ENCODE measurements at regions of chr19 and their contacts with region 1.

Region 1: DNA sequence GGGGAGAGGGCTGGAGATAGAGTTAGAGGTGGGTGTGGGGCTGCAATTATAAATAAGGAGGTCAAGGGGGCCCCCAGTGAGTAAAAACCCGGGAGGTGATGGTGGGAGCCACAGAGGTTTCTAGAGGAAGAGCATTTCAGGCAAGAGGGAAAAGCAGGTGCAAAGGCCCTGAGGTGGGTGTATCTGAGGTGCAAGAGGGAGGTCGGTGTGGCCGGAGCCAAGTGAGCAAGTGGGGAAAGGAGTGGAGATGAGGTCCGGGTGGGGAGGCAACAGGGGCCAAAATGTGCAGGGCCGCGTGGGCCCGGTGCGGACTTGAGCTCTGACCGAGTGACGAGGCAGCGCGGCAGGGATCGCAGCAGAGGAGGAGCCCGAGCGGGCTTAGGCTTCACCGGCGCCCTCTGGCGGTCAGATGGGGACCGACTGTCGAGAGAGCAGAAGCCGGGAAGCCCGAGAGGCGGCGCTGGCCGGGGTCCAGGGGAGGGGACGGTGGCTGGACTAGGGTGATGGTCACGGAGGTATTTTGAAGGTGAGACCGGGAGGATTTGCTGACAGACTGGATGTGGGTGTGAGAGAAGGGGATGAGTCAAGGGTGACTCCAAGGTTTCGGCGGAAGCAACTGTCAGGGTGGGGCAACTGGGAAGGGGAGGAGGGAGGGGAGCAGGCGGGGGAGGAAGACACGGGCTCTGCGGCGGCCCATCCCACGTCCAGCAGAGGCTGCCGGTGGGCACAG is 17.7 kb upstream of the SPACA4 start:
- DNase-seq: peak; percentile 90 to 93
- ATAC-seq: peak; percentile 84 to 85
- H3K4me3 ChIP-seq: peak overlapping the region; percentile 27
- H3K27ac ChIP-seq: peak overlapping the region; percentile 58 to 85
- H3K4me1 ChIP-seq: peaks cover 9% of the 10 kb centered on the region
- CTCF ChIP-seq: peak; percentile 99
- EP300 ChIP-seq: peak in 1 of 2 experiments; percentile 31; a peak in 1 of 5 replicates
- POLR2A ChIP-seq: no peak
- RAD21 ChIP-seq: peak; percentile 78 to 87

Region 2: DNA sequence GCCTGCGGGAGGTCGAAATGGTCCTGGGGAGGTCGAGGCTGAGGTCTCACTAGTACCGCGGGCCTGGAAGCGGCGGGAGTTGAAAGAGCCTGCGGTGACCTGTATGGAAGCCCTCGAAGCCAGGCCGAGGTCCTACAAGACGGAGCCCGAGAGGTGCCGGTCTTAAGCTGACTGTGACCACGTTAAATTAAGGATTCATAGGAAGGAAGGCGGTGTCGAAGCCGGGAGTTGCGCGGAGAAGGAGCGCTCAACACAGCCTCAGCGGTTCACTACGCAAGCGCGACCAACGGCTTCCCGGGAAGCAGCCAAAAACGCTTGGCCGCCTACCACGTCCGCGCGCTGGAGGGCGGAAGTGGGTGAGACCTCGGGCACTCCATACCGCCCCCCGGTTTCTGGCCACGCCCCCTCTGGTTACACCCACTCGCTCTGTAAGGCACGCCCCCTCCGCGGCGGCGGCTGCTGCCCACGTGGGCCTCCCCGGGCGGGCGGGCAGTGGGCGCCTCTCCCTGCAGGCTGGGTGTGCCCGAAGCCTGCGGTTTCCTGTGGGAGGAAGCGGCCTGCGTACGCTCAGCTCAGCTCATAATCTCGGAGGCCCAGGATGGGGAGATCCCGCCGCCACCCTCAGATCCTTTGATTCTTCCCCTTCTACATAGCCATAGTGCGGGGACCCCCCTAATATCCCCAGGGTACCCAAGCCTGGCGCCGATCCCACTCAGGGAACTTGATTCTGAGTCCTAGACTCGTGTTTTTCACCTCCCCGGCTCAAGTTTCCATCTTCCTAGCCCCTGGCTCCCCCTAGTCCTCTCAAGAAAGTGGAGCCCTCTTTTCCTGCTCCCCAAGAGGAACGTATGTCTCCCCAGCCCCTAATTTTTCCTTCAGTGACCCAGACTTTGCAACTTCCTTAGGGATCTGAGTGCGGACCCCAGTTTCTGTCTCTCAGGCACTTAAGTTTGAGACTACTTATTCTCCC is 266.9 kb before region 1 on chr19:
- CTCF ChIA-PET with region 1: interaction called, 12 read pairs
- POLR2A ChIA-PET with region 1: interaction called, 3 read pairs
- DNase-seq: peak; percentile 94 to 99
- ATAC-seq: peak; percentile 67 to 74
- H3K4me3 ChIP-seq: peak overlapping the region; percentile 57
- H3K27ac ChIP-seq: peak overlapping the region; percentile 92 to 94
- H3K4me1 ChIP-seq: peaks cover 45% of the 10 kb centered on the region
- CTCF ChIP-seq: no peak
- EP300 ChIP-seq: no peak
- POLR2A ChIP-seq: peak; percentile 72
- RAD21 ChIP-seq: 0 out of 5 replicates have a peak, but pooled peaks of 1 of the 2 experiments have one; percentile 6

Region 3: DNA sequence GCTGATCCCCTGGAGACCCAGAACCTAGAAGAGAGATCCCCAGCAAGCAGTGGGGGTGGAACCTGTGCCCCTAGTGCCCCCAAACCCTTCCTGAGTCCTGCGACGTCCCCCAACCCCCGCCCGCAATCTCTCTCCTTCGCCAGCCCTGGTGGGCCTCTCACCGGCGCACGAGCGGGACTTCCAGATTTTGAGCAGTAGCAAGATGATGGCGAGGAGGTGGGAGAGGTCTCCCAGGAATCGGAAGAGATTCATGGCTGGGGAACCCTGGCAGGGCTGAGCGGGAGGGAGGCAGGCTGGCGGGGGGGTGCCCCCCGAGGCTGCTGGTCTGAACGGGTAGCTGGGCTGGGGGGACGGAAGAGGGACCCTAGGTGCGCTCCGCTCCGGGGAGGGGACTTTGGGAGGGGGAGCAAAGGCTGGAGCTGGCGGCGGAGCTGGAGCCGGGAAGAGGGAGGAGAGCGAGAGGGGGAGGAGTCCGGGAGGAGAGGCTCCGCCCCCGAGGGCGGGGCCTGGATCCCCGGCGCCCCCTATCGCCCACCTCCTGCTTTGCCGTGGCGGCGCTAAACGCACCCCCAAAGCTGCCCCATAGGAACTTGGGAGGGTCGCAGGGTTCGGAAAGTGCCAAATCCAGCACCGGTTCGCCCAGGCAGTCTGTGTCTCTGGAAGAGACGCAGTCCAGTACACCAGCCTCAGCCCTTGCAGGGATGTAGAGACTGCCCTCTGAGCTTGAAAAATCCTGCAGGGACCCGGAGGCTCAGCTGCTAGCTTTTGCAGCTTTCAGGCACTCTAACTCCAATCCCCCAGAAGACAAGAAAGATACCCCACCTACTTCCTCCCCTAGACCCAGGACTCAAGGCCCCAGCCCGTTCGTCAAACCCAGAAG is 197.5 kb before region 1 on chr19 and contains the start of gene KDELR1:
- CTCF ChIA-PET with region 1: interaction called, 14 read pairs
- POLR2A ChIA-PET with region 1: interaction called, 5 read pairs
- DNase-seq: peak; percentile 77 to 78
- ATAC-seq: peak; percentile 54 to 72
- H3K4me3 ChIP-seq: peak within 1 kb of the TSS; percentile 97
- H3K27ac ChIP-seq: peak within 1 kb of the TSS; percentile 95 to 97
- H3K4me1 ChIP-seq: peaks cover 54% of the 10 kb centered on the region
- CTCF ChIP-seq: peak; percentile 90
- EP300 ChIP-seq: no peak
- POLR2A ChIP-seq: peak; percentile 72
- RAD21 ChIP-seq: peak; percentile 31 to 47; a peak in 4 of 5 replicates
- polyA plus RNA-seq, gene KDELR1: 200 and 270 TPM in 2 replicates

Region 4: GRCh38 chr19:48492925-48493717 is 95.7 kb before region 1 on chr19:
- CTCF ChIA-PET with region 1: interaction called, 268 read pairs
- POLR2A ChIA-PET with region 1: interaction called, 18 read pairs
- DNase-seq: peak; percentile 95 to 100
- ATAC-seq: peak; percentile 67 to 85
- H3K4me3 ChIP-seq: peak overlapping the region; percentile 65
- H3K27ac ChIP-seq: peak overlapping the region; percentile 86 to 94
- H3K4me1 ChIP-seq: peaks cover 50% of the 10 kb centered on the region
- CTCF ChIP-seq: no peak
- EP300 ChIP-seq: no peak
- POLR2A ChIP-seq: peak; percentile 89
- RAD21 ChIP-seq: no peak

Region 5: DNA sequence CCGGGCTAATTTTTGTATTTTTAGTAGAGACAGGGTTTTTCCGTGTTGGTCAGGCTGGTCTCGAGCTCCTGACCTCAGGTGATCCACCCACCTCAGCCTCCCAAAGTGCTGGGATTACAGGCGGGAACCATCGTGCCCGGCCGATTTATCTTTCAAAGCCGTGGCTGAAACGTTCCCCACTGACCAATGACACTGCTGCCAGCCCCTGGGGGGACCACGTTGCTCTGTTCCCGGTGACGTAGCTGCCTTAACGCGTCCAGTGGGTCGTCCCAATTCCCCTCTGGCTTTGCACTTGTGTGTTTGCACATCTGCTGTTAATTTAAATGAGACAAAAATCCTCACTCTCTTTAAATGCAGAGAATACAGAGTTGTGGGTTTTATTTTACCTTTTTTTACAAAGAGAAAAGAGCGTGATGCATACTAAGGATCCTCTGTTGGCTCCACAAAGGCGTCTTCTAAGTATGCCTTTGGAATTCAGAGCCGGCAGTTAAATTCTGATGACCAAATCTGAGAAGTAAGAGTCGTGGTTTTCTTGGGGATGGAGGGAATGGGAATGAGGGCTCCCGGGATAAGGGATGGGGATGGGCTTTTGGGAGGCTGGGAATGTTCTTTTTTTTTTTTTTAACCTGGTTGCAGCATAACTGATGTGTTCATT is 58.6 kb before region 1 on chr19:
- CTCF ChIA-PET with region 1: interaction called, 17 read pairs
- POLR2A ChIA-PET with region 1: no interaction called
- DNase-seq: no peak
- ATAC-seq: 0 out of 6 replicates have a peak, but pooled peaks of 1 of the 2 experiments have one; percentile 13
- H3K4me3 ChIP-seq: no peak overlapping the region
- H3K27ac ChIP-seq: no peak overlapping the region
- H3K4me1 ChIP-seq: no peaks in the 10 kb centered on the region
- CTCF ChIP-seq: no peak
- EP300 ChIP-seq: no peak
- POLR2A ChIP-seq: no peak
- RAD21 ChIP-seq: no peak

Region 6: GRCh38 chr19:48568345-48568886 is 20.4 kb before region 1 on chr19:
- CTCF ChIA-PET with region 1: interaction called, 259 read pairs
- POLR2A ChIA-PET with region 1: interaction called, 9 read pairs
- DNase-seq: peak; percentile 91 to 98
- ATAC-seq: peak; percentile 95 to 97
- H3K4me3 ChIP-seq: peak overlapping the region; percentile 23; the same call in 1 of the 3 replicates
- H3K27ac ChIP-seq: peak overlapping the region; percentile 97 to 100
- H3K4me1 ChIP-seq: peaks cover 85% of the 10 kb centered on the region
- CTCF ChIP-seq: no peak
- EP300 ChIP-seq: peak; percentile 59 to 87; a peak in 3 of 5 replicates
- POLR2A ChIP-seq: peak; percentile 47
- RAD21 ChIP-seq: peak; percentile 23 to 55